Right cardiac atrium (tissue), 5 donors: ENCODE measurements at regions of chr19 and their contacts with region 1.

Region 1: DNA sequence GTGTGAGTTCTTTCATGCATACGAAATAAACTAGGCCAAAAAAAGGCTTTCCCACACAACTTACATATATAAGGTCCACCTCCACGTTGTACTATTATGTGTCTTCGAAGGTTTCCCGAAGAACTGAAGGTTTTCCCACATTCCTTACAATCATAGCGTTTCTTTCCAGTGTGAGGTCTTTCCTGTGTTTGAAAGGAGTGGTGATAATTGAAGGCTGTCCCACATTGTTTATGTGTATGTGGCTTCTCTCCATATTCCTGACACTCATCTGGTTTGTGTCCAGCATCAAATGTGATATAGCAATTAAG is 14.6 kb downstream of the ZNF442 start:
- DNase-seq: no peak
- ATAC-seq: no peak
- H3K4me3 ChIP-seq: no peak overlapping the region
- H3K27ac ChIP-seq: no peak overlapping the region
- H3K4me1 ChIP-seq: no peaks in the 10 kb centered on the region
- H3K27me3 ChIP-seq: no peaks in the 10 kb centered on the region

Region 2: DNA sequence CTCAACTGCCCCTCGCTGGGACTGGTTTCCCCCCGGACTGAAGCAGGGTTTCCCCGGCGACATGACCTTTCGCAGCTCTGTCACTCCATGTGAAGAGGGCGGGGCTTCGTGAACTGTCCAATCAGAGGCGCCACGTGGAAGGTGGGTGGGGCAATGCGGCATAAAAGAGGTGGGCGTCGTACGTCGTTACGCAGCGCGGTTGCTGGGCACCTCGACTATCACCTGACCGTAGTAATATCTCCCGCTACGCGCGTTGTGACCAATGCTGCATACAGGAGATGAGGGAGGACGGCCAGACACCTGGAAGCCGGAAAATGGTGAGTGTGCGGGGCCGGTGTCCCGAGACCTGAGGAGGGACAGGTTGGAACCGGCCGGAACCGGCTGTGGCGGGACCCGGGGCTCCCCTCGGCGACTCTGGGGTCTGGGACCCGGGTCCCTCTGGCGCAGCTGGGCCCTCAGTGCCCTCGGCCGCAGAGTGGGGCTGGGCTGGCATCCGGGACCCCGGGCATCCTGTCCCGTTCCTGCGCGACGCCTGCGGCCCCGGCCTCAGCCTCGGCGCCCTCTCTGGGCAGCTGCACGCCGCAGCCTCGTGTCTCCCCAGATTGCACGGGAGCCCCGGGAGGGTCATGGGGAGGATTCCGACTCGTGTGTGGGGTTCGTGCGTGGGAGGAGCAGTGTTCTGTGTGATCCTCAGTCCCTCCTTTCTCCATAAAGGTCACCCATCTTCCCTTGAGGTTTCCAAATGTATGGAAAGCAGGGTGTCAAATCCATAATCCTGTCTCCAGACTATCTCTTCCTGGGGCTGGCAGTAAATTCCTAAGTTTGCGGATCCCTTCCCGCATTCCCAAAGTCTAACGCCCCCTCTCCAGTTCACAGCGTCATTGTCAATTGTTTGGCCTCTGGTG is 155.8 kb before region 1 on chr19:
- intact Hi-C with region 1: loop called in 1 of 4 experiments (anchors 10 kb)
- DNase-seq: peak; percentile 91 to 95 (median 94)
- ATAC-seq: peak; percentile 98 to 99
- H3K4me3 ChIP-seq: peak overlapping the region; percentile 82
- H3K27ac ChIP-seq: peak overlapping the region; percentile 43
- H3K4me1 ChIP-seq: peaks cover 3% of the 10 kb centered on the region
- H3K27me3 ChIP-seq: no peaks in the 10 kb centered on the region

Region 3: DNA sequence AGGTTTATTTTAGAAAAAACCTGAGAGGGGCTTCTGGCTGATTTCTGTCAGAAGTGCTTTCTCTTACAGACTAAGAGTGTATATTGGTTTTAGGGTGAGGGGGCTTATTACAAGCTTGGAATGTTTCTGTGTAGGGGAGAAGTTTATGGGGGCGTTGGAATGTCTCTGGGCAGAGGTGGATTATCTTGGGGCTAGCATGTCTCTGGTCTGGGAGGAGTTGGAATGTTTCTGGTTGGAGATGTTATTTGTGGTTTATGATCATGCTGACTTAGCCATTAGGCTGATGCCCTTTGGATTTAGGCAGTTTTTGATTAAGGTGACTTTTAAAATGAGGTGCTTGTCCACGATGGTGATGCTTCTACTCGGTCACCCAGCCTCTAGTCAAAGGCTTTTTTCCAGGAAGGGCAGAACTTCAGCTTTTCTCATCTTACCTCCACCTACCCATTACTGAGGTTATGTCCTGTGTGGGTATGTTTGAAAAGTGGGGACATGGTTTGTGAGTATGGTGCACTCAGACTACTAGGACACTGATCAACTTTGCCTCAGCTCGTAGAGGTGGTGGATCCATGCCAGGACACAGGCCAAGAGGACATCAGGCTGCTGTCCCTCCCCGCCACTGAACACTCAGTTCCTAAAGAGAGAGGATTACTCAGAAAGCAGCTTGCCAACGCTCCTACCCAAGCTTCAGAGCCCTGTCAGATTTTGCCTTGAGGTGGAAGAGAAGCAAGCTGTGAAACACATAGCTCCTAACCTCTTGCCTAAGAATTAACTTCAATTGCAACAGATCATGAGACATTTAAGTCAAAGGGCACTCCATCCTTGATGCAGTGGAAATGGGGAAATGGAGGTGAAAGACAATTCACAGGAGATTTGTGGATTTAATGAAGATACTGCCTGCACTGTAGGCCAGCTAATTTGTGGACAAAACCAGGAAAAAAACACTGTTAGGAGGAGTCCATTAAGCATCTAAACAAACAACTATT is 119.8 kb before region 1 on chr19:
- intact Hi-C with region 1: no loop called
- DNase-seq: peak in 2 of 3 donors; percentile 28 to 62
- ATAC-seq: peak; percentile 72 to 81
- H3K4me3 ChIP-seq: no peak overlapping the region
- H3K27ac ChIP-seq: peak overlapping the region; percentile 79
- H3K4me1 ChIP-seq: peaks cover 6% of the 10 kb centered on the region
- H3K27me3 ChIP-seq: no peaks in the 10 kb centered on the region